ENCODE measurements at regions of chr19 and their contacts with region 1.

Region 1: DNA sequence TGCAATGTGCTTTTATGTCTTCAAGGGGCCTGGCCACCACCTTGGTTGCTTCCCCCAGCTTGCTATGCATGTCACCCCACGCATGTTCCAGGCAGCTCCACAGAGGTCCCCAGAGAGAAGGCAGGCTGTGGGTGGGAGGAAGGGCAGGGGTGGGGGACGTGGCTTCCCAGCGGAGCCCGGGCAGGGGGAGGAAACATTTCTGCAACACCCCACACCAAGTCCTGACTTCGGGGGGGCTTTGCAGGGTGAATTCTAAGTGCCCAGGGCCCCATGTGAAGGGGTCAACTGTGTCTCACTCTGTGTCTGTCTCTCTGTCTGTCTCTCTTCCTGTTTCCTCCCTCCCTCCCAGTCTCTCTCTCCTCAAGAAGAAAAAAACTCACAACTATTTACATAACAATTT is 39.6 kb downstream of the LTBP4 start:
- DNase-seq: no peak
- H3K4me3 Mint-ChIP-seq: no peak overlapping the region
- H3K27ac Mint-ChIP-seq: no peak overlapping the region
- H3K4me1 Mint-ChIP-seq: peaks cover 12% of the 10 kb centered on the region
- H3K27me3 Mint-ChIP-seq: peaks cover 23% of the 10 kb centered on the region

Region 2: DNA sequence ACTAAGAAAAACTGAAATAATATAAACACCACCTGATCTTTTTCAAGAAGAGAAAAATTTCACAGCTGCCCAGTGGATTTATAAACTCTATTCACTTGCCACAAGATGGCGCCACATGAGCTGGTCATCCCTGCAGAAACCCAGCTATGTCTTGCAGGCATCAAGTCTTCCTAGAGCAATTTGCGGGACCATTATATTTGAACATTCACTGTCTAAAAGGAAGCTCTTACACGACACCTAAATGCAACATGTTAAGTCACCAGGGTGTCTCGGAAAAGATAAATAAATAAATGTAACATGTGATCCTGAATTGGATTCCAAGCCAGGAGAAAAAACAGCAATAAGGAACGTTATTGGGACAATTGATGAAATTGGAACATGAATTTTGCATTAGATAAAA is 335.3 kb before region 1 on chr19:
- CTCF ChIA-PET with region 1: interaction called, 10 read pairs
- DNase-seq: peak; percentile 88
- H3K4me3 Mint-ChIP-seq: no peak overlapping the region
- H3K27ac Mint-ChIP-seq: no peak overlapping the region
- H3K4me1 Mint-ChIP-seq: no peaks in the 10 kb centered on the region
- H3K27me3 Mint-ChIP-seq: no peaks in the 10 kb centered on the region

Region 3: GRCh38 chr19:40523322-40524047 is 117.3 kb before region 1 on chr19:
- CTCF ChIA-PET with region 1: interaction called, 13 read pairs
- DNase-seq: peak; percentile 69
- H3K4me3 Mint-ChIP-seq: no peak overlapping the region
- H3K27ac Mint-ChIP-seq: no peak overlapping the region
- H3K4me1 Mint-ChIP-seq: peaks cover 3% of the 10 kb centered on the region
- H3K27me3 Mint-ChIP-seq: peaks cover 65% of the 10 kb centered on the region

Region 4: DNA sequence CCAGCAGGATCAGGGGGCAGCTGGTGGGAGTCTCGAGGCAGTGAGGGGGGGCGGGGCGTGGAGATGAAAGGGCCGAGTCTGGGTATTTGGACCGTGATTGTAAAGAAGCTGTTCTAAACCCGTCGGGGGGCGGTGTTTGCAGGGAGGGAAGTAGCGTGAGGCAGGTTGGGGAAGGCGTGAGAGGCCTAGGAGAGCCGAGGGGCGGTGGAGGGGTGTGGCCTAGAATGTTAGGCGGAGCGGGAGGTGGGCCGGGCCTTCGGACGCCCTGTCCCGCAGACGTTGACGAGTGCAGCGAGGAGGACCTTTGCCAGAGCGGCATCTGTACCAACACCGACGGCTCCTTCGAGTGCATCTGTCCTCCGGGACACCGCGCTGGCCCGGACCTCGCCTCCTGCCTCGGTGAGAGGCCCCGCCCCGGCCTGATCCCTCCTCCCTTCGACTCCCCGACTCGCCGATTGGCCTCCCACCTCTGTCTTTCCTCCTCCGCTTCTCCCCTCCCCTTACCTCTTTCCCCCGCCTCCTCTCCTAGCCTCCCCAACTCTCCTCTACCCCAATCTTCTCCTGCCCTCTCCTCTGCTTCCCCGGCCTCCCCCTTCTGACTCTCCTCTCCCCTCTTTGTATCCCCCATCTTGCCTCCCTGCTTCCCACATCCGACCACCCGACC is 27.0 kb before region 1 on chr19:
- CTCF ChIA-PET with region 1: interaction called, 23 read pairs
- DNase-seq: peak; percentile 92
- H3K4me3 Mint-ChIP-seq: peak overlapping the region; percentile 82
- H3K27ac Mint-ChIP-seq: peak overlapping the region; percentile 88
- H3K4me1 Mint-ChIP-seq: peaks cover 66% of the 10 kb centered on the region
- H3K27me3 Mint-ChIP-seq: no peaks in the 10 kb centered on the region

Region 5: GRCh38 chr19:40621966-40622772 is 18.6 kb before region 1 on chr19:
- CTCF ChIA-PET with region 1: interaction called, 15 read pairs
- DNase-seq: no peak
- H3K4me3 Mint-ChIP-seq: no peak overlapping the region
- H3K27ac Mint-ChIP-seq: no peak overlapping the region
- H3K4me1 Mint-ChIP-seq: peaks cover 17% of the 10 kb centered on the region
- H3K27me3 Mint-ChIP-seq: no peaks in the 10 kb centered on the region

Region 6: GRCh38 chr19:40658031-40658430 is 17.3 kb after region 1 on chr19:
- CTCF ChIA-PET with region 1: interaction called, 13 read pairs
- DNase-seq: no peak
- H3K4me3 Mint-ChIP-seq: no peak overlapping the region
- H3K27ac Mint-ChIP-seq: no peak overlapping the region
- H3K4me1 Mint-ChIP-seq: peaks cover 10% of the 10 kb centered on the region
- H3K27me3 Mint-ChIP-seq: peaks cover 18% of the 10 kb centered on the region